ENCODE measurements at regions of chr17 and their contacts with region 1.

Region 1: DNA sequence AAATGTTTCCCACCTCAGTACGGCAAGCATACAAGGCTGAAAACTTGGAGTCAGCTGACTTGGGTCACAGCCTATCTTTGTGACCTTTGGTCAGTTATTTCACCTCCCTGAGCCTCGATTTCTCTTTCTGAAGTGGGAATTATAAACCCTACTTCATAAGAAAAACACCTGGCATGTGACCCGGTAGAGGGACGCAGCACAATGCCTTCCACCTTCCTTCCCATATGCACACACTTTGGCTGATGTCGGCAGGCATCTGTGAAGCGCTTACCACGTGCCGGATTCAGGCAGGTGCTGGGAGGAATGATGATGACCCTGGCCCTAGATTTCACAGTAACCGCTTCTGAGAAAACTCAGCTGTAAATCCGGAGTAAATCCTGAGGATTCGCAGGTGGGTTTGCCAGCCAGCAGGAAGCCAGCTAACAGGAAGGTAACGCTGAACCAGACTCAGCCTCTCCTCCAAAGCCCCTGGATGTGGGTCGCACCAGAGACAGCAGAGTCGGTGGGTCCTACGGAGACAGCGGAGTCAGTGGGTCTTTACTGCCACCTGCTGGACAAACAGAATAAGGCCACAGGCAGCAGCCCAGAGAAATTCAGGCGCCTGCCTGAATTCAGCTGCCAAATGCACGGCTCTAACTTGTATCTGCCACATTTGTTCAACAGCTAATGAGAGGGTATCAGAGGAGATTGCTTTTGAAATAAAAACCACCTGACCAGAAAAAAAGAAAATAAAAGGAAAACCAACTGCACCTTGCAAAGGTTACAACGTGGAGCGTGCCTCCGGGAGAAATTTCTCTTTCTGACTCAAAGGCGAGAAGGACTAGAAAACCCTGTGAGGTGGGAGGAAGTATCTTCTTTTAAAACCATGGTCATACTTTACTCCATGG is 16.6 kb downstream of the COPRS start:
- DNase-seq: peak; percentile 71
- ATAC-seq: peak; percentile 93
- H3K4me3 ChIP-seq: no peak overlapping the region
- H3K27ac ChIP-seq: peak overlapping the region; percentile 18
- H3K4me1 ChIP-seq: peaks cover 17% of the 10 kb centered on the region
- H3K27me3 ChIP-seq: no peaks in the 10 kb centered on the region
- CTCF ChIP-seq: peak; percentile 97

Region 2: DNA sequence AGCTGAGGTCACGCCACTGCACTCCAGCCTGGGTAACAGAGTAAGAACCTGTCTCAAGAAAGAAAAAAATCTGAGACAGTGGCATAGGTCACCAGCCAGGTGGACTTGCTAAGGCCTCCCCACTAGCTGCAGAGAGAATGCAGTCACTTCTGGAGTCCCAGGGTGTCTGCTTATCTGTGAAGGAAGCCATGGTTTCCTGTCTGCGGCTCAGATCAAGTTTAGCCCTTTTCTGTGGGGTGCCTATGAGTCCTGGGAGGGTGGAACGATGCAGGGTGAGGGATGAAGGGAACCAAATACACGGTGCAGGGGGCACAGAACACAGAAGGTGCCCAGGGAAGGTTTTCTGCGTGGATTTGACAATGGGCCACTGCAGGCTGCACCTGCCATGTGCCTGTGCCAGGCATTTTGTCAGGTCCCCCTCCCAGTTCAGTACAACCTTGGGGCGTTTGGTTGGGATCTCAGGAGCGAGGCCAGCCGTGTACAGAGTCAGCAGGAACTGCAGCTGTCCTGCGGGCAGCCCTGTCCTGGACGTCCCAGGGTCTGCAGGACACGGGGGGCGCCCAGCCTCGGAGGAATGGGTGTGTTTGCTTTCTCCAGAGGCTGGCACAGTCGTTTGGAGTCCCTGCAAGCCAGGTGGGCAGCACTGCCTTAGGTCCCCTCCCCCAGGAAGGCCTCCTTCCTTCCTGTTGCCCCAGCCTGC is 409.2 kb before region 1 on chr17:
- intact Hi-C with region 1: loop called (anchors 10 kb)
- DNase-seq: no peak
- ATAC-seq: no peak
- H3K4me3 ChIP-seq: no peak overlapping the region
- H3K27ac ChIP-seq: no peak overlapping the region
- H3K4me1 ChIP-seq: peaks cover 4% of the 10 kb centered on the region
- H3K27me3 ChIP-seq: peaks cover 5% of the 10 kb centered on the region
- CTCF ChIP-seq: no peak

Region 3: GRCh38 chr17:31558748-31559644 is 283.4 kb before region 1 on chr17:
- intact Hi-C with region 1: loop called (anchors 5 kb)
- DNase-seq: peak; percentile 90
- ATAC-seq: peak; percentile 93
- H3K4me3 ChIP-seq: peak overlapping the region; percentile 67
- H3K27ac ChIP-seq: peak overlapping the region; percentile 82
- H3K4me1 ChIP-seq: peaks cover 26% of the 10 kb centered on the region
- H3K27me3 ChIP-seq: no peaks in the 10 kb centered on the region
- CTCF ChIP-seq: peak; percentile 79

Region 4: GRCh38 chr17:31926100-31926729 is 83.8 kb after region 1 on chr17:
- intact Hi-C with region 1: no loop called
- DNase-seq: no peak
- ATAC-seq: no peak
- H3K4me3 ChIP-seq: no peak overlapping the region
- H3K27ac ChIP-seq: no peak overlapping the region
- H3K4me1 ChIP-seq: no peaks in the 10 kb centered on the region
- H3K27me3 ChIP-seq: no peaks in the 10 kb centered on the region
- CTCF ChIP-seq: no peak